Heart right ventricle (tissue), 16 donors: ENCODE measurements at regions of chr10 and their contacts with region 1.

Region 1: GRCh38 chr10:13074561-13075451 is 25.2 kb upstream of the OPTN start:
- DNase-seq: peak; percentile 52 to 63
- ATAC-seq: peak in 6 of 8 donors; percentile 49 to 85 (median 77)
- H3K4me3 ChIP-seq: no peak overlapping the region
- H3K27ac ChIP-seq: no peak overlapping the region
- H3K4me1 ChIP-seq: peaks cover 0 to 5% (median 0%) of the 10 kb centered on the region in 9 donors
- H3K27me3 ChIP-seq: peaks cover 0 to 19% (median 11%) of the 10 kb centered on the region in 7 donors
- CTCF ChIP-seq: peak; percentile 46 to 91 (median 86)

Region 2: DNA sequence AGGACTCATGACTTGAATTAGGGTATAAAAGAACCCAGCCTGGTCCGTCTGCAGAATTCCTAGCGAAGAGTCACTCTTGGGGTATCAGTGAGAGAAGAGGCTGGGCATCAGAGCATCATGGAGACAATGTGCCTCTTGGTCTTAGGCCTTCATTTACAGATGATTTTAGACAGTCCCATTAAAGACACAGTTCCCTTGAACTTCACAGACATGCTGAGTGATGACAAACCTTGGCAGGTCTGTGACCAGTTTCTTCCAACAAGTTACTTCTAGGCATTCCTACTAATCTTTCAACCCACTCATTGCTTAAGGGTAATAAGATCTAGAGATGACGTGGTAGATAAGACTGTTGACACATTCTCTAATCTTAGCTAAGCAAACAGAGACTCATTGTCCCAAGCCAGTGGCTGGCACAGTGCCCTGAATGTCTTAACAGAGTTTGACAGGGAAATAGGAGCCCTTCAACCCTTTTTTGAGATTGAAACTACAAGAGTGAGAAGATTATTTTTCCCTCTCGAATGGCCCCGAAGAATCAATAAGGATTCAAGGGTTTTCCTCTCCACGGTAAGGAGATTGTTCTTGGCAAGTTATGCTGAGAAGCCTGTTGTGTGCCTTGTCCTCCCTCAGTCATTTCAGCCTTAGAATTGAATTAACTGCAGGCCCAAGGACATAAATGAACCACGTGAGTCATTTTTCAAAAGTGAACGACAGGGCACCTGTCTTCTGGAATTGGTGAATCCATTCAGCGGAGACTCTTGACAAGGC is 354.4 kb before region 1 on chr10:
- intact Hi-C with region 1: loop called in 3 of 10 experiments (anchors 5 to 10 kb)
- DNase-seq: peak; percentile 54 to 63
- ATAC-seq: peak in 7 of 8 donors; percentile 70 to 93 (median 78)
- H3K4me3 ChIP-seq: no peak overlapping the region
- H3K27ac ChIP-seq: peak overlapping the region in 3 of 10 donors; percentile 24 to 42 (median 42)
- H3K4me1 ChIP-seq: peaks cover 0 to 21% (median 15%) of the 10 kb centered on the region in 9 donors
- H3K27me3 ChIP-seq: no peaks in the 10 kb centered on the region
- CTCF ChIP-seq: no peak

Region 3: DNA sequence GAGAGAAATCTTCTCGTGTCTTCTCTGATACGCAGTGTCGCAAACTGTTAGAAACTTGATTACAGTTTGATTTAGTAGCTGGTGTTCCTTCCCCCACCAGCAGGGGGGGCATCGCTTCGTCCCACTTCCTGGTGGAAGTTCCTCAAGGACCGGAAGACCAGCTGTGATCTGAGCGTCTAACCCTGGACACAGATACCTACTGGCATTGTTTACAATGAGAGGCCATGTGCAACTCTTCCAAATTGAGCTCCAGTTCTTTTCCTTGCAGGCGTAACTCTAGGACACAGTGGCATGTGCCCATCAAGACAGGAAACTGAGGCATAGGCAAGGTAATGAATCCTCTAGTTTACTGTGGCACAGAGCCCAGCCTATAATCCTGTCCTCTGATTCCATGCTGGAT is 292.3 kb before region 1 on chr10:
- intact Hi-C with region 1: loop called in 3 of 10 experiments (anchors 10 kb)
- DNase-seq: peak; percentile 29 to 30
- ATAC-seq: no peak
- H3K4me3 ChIP-seq: no peak overlapping the region
- H3K27ac ChIP-seq: no peak overlapping the region
- H3K4me1 ChIP-seq: peaks cover 0 to 13% (median 0%) of the 10 kb centered on the region in 9 donors
- H3K27me3 ChIP-seq: no peaks in the 10 kb centered on the region
- CTCF ChIP-seq: peak; percentile 36 to 78 (median 70)

Region 4: DNA sequence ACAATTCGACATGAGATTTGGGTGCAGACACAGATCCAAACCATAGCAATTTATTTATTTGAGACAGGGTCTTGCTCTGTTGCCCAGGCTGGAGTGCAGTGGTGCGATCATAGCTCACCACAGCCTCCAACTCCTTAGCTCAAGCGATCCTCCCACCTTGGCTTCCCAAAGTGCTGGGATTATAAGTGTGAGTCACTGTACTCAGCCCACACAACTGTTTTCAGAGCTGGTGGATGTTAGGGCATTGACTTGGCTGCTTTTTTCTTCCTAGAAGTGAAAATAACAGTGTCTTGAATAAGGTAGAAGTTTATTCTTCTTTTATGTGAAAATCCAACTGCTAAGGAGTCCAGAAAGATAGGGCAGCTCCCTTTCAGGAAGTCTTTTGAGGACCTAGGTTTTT is 205.4 kb before region 1 on chr10:
- intact Hi-C with region 1: no loop called
- DNase-seq: no peak
- ATAC-seq: no peak
- H3K4me3 ChIP-seq: no peak overlapping the region
- H3K27ac ChIP-seq: no peak overlapping the region
- H3K4me1 ChIP-seq: no peaks in the 10 kb centered on the region
- H3K27me3 ChIP-seq: peaks cover 0 to 14% (median 0%) of the 10 kb centered on the region in 7 donors
- CTCF ChIP-seq: no peak

Region 5: DNA sequence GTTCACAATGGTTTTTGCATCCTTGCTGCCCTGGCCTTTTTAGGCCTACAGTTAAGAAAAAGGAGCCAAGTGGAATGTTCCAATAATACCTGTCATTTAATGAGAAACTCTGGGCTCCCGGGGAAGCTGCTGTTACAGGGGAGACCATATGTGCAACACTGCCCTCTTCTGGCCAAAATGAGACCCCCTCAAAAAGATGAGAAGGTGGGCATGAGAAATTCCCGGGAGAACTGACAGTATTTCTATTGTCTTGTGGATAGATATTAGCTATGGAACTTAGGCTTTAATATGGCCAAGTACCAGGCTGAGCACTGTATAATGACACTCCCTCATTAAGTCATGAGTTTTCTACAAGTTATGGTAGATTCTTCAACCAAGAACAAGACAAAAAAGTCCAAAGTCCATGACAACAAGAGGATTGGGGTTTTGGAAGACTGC is 172.7 kb before region 1 on chr10:
- intact Hi-C with region 1: loop called in 4 of 10 experiments (anchors 10 kb)
- DNase-seq: peak in 1 of 2 donors; percentile 62
- ATAC-seq: peak in 3 of 8 donors; percentile 33 to 46 (median 34)
- H3K4me3 ChIP-seq: no peak overlapping the region
- H3K27ac ChIP-seq: no peak overlapping the region
- H3K4me1 ChIP-seq: peaks cover 0 to 9% (median 0%) of the 10 kb centered on the region in 9 donors
- H3K27me3 ChIP-seq: peaks cover 0 to 11% (median 0%) of the 10 kb centered on the region in 7 donors
- CTCF ChIP-seq: peak; percentile 54 to 88 (median 78)

Region 6: DNA sequence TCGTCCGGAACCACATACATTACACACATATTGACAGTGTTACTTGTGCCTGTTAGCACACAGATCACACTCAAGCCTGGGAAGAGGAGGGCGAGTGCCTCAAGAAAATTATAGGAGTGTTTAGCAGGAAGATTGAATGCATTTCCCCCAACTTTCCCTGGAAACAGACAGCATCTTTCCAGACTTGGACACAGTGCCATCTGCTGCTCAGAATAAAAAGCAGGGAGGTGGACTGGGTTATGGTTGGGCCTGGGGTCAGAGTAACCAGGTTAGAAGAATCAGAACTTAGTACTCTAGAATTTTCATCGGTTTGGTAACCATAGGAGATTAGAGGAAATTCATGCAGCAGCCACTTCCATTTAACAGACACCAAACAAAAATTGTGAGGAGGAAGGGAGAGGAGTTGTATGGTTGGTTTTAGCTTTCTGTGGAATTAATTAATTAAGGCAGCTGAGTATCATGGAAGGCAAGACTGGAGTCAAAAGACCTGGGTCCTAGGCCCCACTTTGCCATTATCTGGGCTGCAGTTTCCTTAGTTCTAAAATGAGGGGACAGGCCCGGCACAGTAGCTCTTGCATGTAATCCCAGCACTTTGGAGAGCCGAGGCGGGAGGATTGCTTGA is 18.2 kb before region 1 on chr10:
- intact Hi-C with region 1: no loop called
- DNase-seq: no peak
- ATAC-seq: no peak
- H3K4me3 ChIP-seq: no peak overlapping the region
- H3K27ac ChIP-seq: no peak overlapping the region
- H3K4me1 ChIP-seq: no peaks in the 10 kb centered on the region
- H3K27me3 ChIP-seq: peaks cover 0 to 17% (median under 1%) of the 10 kb centered on the region in 7 donors
- CTCF ChIP-seq: peak in 7 of 9 donors; percentile 26 to 50 (median 38)

Region 7: GRCh38 chr10:14102056-14102455 is 1027.2 kb after region 1 on chr10:
- intact Hi-C with region 1: no loop called
- DNase-seq: no peak
- ATAC-seq: no peak
- H3K4me3 ChIP-seq: no peak overlapping the region
- H3K27ac ChIP-seq: no peak overlapping the region
- H3K4me1 ChIP-seq: no peaks in the 10 kb centered on the region
- H3K27me3 ChIP-seq: peaks cover 0 to 7% (median 0%) of the 10 kb centered on the region in 7 donors
- CTCF ChIP-seq: no peak